Activated CD4-positive, alpha-beta memory T cell treated with anti-CD3 and anti-CD28 coated beads for 36 hours (primary cell): ENCODE measurements at regions of chr12 and their contacts with region 1.

Region 1: DNA sequence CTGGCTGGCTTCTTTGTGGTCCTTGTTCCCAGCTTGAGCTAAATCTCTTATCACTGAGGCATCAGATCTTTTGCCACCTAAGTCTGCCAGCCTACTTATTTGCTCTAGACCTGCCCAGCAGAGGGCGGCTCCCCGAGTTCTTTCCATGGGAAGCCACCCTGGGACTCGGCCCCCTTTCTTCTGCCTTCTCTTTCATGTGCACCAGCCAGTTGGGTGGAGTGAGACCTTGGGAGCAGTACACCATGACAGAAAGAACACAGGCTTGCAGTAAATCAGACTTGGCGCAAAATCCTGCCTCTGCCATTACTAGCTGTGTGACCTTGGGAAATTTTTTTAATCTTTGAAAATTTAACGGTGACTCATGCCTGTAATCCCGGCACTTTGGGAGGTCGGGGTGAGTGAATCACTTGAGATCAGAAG is 7.4 kb downstream of the SMAGP start:
- DNase-seq: peak; percentile 57
- H3K4me3 Mint-ChIP-seq: no peak overlapping the region
- H3K27ac Mint-ChIP-seq: no peak overlapping the region
- H3K4me1 Mint-ChIP-seq: peaks cover 18% of the 10 kb centered on the region
- H3K27me3 Mint-ChIP-seq: no peaks in the 10 kb centered on the region

Region 2: GRCh38 chr12:51351913-51352532 is 89.3 kb after region 1 on chr12:
- CTCF ChIA-PET with region 1: interaction called, 12 read pairs
- POLR2A ChIA-PET with region 1: no interaction called
- intact Hi-C with region 1: no loop called
- DNase-seq: peak; percentile 63
- H3K4me3 Mint-ChIP-seq: no peak overlapping the region
- H3K27ac Mint-ChIP-seq: no peak overlapping the region
- H3K4me1 Mint-ChIP-seq: peaks cover 3% of the 10 kb centered on the region
- H3K27me3 Mint-ChIP-seq: no peaks in the 10 kb centered on the region